ENCODE measurements at regions of chr6 and their contacts with region 1.

Region 1: GRCh38 chr6:18503593-18504231 is 116.6 kb downstream of the RNF144B start:
- DNase-seq: peak; percentile 32 to 48
- H3K4me3 ChIP-seq: peak overlapping the region; percentile 14 to 22
- H3K27ac ChIP-seq: no peak overlapping the region
- H3K4me1 ChIP-seq: no peaks in the 10 kb centered on the region
- H3K27me3 ChIP-seq: no peaks in the 10 kb centered on the region
- CTCF ChIP-seq: peak; percentile 85 to 93 (median 86)
- POLR2A ChIP-seq: no peak

Region 2: GRCh38 chr6:18327626-18328025 is 176.1 kb before region 1 on chr6:
- intact Hi-C with region 1: loop called (anchors 5 kb)
- DNase-seq: peak in 1 of 2 donors; percentile 25
- H3K4me3 ChIP-seq: no peak overlapping the region
- H3K27ac ChIP-seq: peak overlapping the region; percentile 33 to 46
- H3K4me1 ChIP-seq: no peaks in the 10 kb centered on the region
- H3K27me3 ChIP-seq: no peaks in the 10 kb centered on the region
- CTCF ChIP-seq: no peak
- POLR2A ChIP-seq: no peak

Region 3: DNA sequence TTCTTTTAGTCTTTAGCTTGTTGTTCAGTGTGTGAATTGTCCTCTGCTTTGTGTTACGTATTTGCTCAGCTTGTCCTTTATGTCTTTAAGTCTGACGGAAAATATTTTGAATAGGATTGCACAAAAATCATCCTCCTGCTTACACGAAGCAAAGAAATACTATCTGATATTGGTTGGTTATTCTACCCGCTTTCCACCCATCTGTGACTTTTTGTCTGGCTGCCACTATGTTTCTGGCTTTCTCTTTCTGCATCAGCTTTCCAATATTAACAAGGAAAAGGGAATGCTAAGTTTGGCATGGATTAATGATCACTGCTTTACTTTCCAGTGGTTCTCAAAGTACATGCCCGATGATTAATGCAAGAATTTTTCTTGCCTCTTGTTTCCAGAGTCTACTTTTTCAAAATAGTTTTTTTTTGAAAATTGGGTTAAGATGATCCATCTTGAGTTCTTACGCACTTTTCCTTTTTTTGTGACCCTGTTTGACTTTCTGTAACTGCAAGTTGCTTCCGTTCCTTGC is 59.6 kb before region 1 on chr6:
- intact Hi-C with region 1: no loop called
- DNase-seq: no peak
- H3K4me3 ChIP-seq: no peak overlapping the region
- H3K27ac ChIP-seq: no peak overlapping the region
- H3K4me1 ChIP-seq: no peaks in the 10 kb centered on the region
- H3K27me3 ChIP-seq: no peaks in the 10 kb centered on the region
- CTCF ChIP-seq: no peak
- POLR2A ChIP-seq: no peak

Region 4: DNA sequence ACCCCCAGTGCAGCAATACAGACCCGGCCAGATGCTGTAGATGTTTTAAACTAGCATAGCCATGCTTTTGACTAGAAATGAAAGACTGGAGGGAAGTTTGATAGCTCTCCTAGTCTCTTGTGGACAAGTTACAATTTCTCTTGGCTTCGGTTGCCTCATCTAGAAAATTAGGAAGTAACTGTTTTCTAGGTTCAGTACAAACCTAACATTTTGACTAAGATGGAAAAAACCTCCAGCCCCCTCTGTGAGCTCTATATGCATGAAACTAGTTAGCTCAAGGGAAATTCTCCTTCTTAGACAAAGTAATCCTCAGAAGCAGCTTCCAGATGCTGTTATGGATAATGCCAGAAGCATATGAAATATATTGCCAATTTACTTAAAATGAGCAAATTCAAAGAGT is 30.0 kb before region 1 on chr6:
- intact Hi-C with region 1: no loop called
- DNase-seq: no peak
- H3K4me3 ChIP-seq: no peak overlapping the region
- H3K27ac ChIP-seq: no peak overlapping the region
- H3K4me1 ChIP-seq: no peaks in the 10 kb centered on the region
- H3K27me3 ChIP-seq: no peaks in the 10 kb centered on the region
- CTCF ChIP-seq: no peak
- POLR2A ChIP-seq: no peak